Mammary epithelial cell (primary cell): ENCODE measurements at regions of chr1 and their contacts with region 1.

Region 1: DNA sequence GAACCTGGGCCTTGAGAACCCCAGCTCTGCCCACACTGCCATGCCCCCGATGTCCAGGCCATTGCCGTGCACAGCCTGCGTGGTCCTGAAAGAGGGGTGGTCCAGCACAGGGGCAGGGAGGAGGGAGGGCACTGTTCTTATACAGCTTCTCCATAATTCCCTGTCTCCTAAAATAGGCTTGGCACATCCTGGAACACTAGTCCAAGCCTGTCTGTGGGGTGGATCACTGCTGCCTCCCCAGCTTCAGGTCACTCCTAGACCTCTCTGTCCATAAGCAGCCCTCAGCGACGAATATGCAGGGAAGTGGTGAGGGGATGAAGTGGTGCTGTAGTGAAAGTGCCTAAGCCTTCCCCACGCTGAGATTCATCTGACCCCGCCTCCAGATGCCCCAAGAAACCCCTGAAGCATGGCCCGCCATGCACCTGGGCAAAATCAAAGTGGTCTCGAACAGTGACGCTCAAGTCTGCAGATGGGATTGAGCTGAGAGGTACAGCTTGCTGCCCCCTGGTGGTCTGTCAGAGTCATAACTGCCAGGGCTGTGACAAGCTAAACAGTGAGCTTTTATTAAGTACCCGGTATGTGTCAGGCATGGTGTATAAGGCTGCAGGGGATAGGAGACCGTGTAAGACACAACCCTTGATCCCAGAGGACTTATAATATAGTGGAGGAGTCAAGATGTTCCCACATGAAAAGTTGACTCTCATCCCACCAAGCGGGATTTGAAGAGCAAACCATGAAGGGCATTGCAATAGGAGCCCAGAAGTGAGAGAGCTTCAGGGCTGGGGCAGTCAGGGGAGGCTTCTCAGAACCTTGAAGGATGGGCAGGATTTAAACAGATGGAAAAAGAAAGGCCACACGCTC is 66.6 kb downstream of the FAM163A start:
- DNase-seq: peak; percentile 54
- H3K4me3 ChIP-seq: no peak overlapping the region
- H3K27ac ChIP-seq: no peak overlapping the region
- H3K4me1 ChIP-seq: peaks cover 13% of the 10 kb centered on the region
- H3K27me3 ChIP-seq: no peaks in the 10 kb centered on the region
- CTCF ChIP-seq: peak; percentile 88 to 95

Region 2: GRCh38 chr1:179251675-179252074 is 558.1 kb before region 1 on chr1:
- CTCF ChIA-PET with region 1: no interaction called
- dilution Hi-C with region 1: no loop called
- in situ Hi-C with region 1: no loop called
- intact Hi-C with region 1: loop called (anchors 1 kb)
- DNase-seq: peak; percentile 25
- H3K4me3 ChIP-seq: no peak overlapping the region
- H3K27ac ChIP-seq: no peak overlapping the region
- H3K4me1 ChIP-seq: no peaks in the 10 kb centered on the region
- H3K27me3 ChIP-seq: no peaks in the 10 kb centered on the region
- CTCF ChIP-seq: peak; percentile 32 to 64

Region 3: GRCh38 chr1:179447489-179447888 is 362.2 kb before region 1 on chr1:
- CTCF ChIA-PET with region 1: interaction called, 14 read pairs
- dilution Hi-C with region 1: no loop called
- in situ Hi-C with region 1: no loop called
- intact Hi-C with region 1: no loop called
- DNase-seq: peak; percentile 4
- H3K4me3 ChIP-seq: no peak overlapping the region
- H3K27ac ChIP-seq: no peak overlapping the region
- H3K4me1 ChIP-seq: no peaks in the 10 kb centered on the region
- H3K27me3 ChIP-seq: peaks cover 2% of the 10 kb centered on the region
- CTCF ChIP-seq: peak; percentile 26 to 28

Region 4: DNA sequence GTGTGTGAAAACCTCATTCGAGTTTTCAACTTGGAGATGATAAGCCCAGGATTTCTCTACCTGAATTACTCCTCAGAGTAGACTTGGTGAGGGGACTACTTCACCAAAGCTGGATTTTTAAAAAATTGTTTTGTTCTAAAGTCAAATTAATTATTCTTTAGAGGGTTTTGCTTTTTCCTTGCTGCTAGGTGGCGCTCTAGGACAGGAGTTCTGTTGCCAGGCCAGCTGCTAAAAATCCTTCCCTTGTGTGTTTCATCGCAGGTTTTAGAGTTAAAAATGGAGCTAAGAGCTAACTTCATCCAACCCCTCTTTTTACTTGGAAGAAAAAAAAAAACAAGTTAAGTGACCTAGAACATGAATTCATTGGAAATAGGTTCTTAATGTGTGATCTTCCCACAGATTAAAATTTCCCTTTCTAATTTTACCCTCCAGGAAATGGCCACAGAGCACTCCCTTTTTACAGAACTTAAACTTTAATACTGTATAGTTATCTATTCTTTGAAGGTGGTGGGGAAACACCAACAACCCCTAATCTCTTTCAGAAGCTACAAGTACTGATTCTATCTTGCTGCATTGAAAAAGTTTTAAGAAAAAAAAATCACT is 103.3 kb before region 1 on chr1:
- CTCF ChIA-PET with region 1: interaction called, 46 read pairs
- dilution Hi-C with region 1: loop called (anchors 10 kb)
- in situ Hi-C with region 1: loop called in 1 of 2 experiments (anchors 10 kb)
- intact Hi-C with region 1: loop called (anchors 1 kb)
- DNase-seq: peak; percentile 32
- H3K4me3 ChIP-seq: no peak overlapping the region
- H3K27ac ChIP-seq: no peak overlapping the region
- H3K4me1 ChIP-seq: no peaks in the 10 kb centered on the region
- H3K27me3 ChIP-seq: no peaks in the 10 kb centered on the region
- CTCF ChIP-seq: peak; percentile 67 to 80

Region 5: DNA sequence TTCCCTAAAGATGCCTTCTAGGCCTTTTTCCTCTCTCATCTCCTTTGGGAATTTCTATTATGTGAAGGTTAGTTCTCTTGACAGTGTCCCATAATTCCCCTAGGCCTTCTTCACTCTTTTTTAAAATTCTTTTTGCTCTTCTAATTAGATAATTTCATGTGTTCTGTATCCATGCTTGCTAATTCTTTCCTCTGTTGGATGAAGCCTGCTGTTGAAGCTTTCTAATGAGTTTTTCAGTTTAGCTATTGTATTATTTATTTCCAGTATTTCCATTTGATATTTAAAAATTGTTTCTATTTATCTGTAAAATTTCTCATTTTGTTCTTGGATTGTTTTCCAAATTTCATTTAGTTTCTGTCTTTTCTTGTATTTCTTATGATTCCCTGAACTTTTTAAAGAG is 95.1 kb before region 1 on chr1:
- CTCF ChIA-PET with region 1: interaction called, 3 read pairs
- dilution Hi-C with region 1: loop called (anchors 10 kb)
- in situ Hi-C with region 1: loop called (anchors 5 to 10 kb)
- intact Hi-C with region 1: no loop called
- DNase-seq: no peak
- H3K4me3 ChIP-seq: no peak overlapping the region
- H3K27ac ChIP-seq: no peak overlapping the region
- H3K4me1 ChIP-seq: no peaks in the 10 kb centered on the region
- H3K27me3 ChIP-seq: no peaks in the 10 kb centered on the region
- CTCF ChIP-seq: no peak

Region 6: DNA sequence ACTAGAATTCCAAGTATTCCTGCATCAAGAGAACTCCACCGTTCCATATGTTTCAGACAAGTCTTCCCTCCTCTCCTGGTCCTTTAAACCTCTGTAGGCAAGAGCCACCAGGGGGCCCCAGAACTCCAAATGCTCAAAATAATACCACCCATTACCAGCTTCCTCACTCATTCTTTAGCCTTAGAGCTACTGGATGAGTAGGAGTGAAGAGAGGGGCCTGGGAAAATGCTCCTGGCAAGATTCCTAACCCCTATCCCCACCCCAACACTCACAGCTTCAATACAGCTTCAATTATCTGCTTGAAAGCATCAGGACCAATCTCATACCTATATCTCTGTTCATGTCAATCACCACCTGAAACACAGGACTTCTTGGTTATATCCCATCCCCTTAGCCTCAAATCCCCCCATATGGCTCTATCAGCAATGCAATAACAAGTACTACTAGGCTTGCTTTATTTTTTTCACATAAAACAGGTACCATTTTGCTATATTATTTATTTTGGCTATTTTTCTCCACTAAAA is 58.1 kb after region 1 on chr1:
- CTCF ChIA-PET with region 1: no interaction called
- dilution Hi-C with region 1: no loop called
- in situ Hi-C with region 1: no loop called
- intact Hi-C with region 1: no loop called
- DNase-seq: peak; percentile 25
- H3K4me3 ChIP-seq: no peak overlapping the region
- H3K27ac ChIP-seq: no peak overlapping the region
- H3K4me1 ChIP-seq: no peaks in the 10 kb centered on the region
- H3K27me3 ChIP-seq: no peaks in the 10 kb centered on the region
- CTCF ChIP-seq: peak; percentile 68 to 69

Region 7: GRCh38 chr1:180131510-180131909 is 321.8 kb after region 1 on chr1:
- CTCF ChIA-PET with region 1: no interaction called
- dilution Hi-C with region 1: no loop called
- in situ Hi-C with region 1: no loop called
- intact Hi-C with region 1: no loop called
- DNase-seq: peak; percentile 52
- H3K4me3 ChIP-seq: no peak overlapping the region
- H3K27ac ChIP-seq: no peak overlapping the region
- H3K4me1 ChIP-seq: no peaks in the 10 kb centered on the region
- H3K27me3 ChIP-seq: no peaks in the 10 kb centered on the region
- CTCF ChIP-seq: no peak

Region 8: DNA sequence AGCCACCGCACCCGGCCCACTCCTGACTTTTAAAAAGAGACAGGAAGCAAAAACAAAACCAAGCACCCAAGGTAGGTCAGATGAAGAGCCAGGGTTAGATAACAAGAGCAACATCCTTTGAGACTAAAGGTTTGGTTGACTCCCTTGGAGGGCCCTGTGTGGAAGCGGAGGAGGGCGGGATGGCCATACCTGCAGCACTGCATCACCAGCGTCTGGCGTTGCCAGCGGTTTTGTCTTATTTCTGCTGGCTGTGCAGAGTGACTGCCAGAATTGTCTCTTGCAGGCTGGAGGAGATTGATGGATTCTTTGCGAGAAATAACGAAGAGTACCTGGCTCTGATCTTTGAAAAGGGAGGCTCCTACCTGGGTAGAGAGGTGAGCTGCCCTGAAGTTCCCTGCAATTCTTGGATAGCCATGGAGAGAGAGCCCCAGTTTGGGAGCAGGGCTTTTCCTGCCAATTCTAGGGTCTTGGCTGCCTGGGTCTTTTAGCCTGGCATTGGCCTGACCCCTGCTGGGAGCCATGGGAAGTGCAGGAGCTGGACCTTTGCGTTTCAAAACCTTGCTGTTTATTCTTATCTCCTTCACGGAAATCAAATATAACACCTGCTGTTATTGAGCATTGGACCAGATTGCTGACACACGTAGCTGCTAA is 368.9 kb after region 1 on chr1:
- CTCF ChIA-PET with region 1: interaction called, 15 read pairs
- dilution Hi-C with region 1: no loop called
- in situ Hi-C with region 1: no loop called
- intact Hi-C with region 1: loop called (anchors 1 kb)
- DNase-seq: no peak
- H3K4me3 ChIP-seq: no peak overlapping the region
- H3K27ac ChIP-seq: no peak overlapping the region
- H3K4me1 ChIP-seq: no peaks in the 10 kb centered on the region
- H3K27me3 ChIP-seq: no peaks in the 10 kb centered on the region
- CTCF ChIP-seq: peak; percentile 98